ENCODE measurements at regions of chr6 and their contacts with region 1.

Region 1: GRCh38 chr6:30686908-30687658 is 638 bp upstream of the PPP1R18 start:
- DNase-seq: peak; percentile 54

Region 2: DNA sequence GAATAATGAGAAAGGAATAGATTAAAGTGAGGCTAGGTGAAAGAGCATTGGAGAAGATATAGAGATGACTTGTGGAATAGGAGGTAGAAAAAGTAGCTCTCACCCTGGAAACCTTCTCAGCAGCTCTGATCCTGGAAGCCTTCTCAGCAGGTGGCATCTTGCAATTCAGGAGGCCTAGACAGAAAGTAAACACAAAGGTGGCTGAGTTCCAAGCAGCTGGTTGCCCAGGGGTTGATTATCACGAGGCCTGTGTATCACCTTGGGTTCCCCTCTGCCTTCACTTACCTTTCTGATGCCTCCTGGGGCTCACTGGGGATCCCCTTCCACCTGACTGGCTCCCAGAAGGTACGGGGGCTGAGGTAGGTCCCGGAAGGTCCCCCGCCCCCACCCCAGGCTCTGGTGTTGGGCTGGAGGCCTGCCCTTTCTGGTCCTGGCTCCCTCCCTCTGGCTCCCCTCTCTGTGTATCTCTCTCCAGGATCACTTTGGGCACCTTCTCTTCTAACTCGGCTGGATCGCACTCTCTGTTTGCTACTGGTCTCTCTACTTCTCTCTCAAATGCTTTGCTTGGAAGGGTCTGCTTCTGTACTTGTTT is 20.3 kb after region 1 on chr6:
- CTCF ChIA-PET with region 1: interaction called, 3 read pairs
- POLR2A ChIA-PET with region 1: interaction called, 17 read pairs
- DNase-seq: no peak